Dendritic cell treated with granulocyte-macrophage colony-stimulating factor and Interleukin-4, amounts not matched to agents 40 ng/mL and 50 ng/mL, for 4 days (primary cell): ENCODE measurements at regions of chr11 and their contacts with region 1.

Region 1: GRCh38 chr11:78416305-78417178 is 1.1 kb downstream of the GAB2 start:
- H3K4me3 Mint-ChIP-seq: peak overlapping the region; percentile 97
- H3K27ac Mint-ChIP-seq: peak overlapping the region; percentile 97
- H3K4me1 Mint-ChIP-seq: peaks cover 66% of the 10 kb centered on the region
- H3K27me3 Mint-ChIP-seq: no peaks in the 10 kb centered on the region

Region 2: GRCh38 chr11:77981346-77981947 is 435.1 kb before region 1 on chr11:
- intact Hi-C with region 1: no loop called
- H3K4me3 Mint-ChIP-seq: no peak overlapping the region
- H3K27ac Mint-ChIP-seq: no peak overlapping the region
- H3K4me1 Mint-ChIP-seq: no peaks in the 10 kb centered on the region
- H3K27me3 Mint-ChIP-seq: no peaks in the 10 kb centered on the region

Region 3: GRCh38 chr11:78228467-78228866 is 188.1 kb before region 1 on chr11:
- intact Hi-C with region 1: loop called (anchors 5 kb)
- H3K4me3 Mint-ChIP-seq: no peak overlapping the region
- H3K27ac Mint-ChIP-seq: no peak overlapping the region
- H3K4me1 Mint-ChIP-seq: peaks cover 27% of the 10 kb centered on the region
- H3K27me3 Mint-ChIP-seq: no peaks in the 10 kb centered on the region

Region 4: GRCh38 chr11:78350646-78351165 is 65.8 kb before region 1 on chr11:
- intact Hi-C with region 1: loop called (anchors 2 kb)
- H3K4me3 Mint-ChIP-seq: peak overlapping the region; percentile 43
- H3K27ac Mint-ChIP-seq: peak overlapping the region; percentile 98
- H3K4me1 Mint-ChIP-seq: peaks cover 91% of the 10 kb centered on the region
- H3K27me3 Mint-ChIP-seq: no peaks in the 10 kb centered on the region

Region 5: DNA sequence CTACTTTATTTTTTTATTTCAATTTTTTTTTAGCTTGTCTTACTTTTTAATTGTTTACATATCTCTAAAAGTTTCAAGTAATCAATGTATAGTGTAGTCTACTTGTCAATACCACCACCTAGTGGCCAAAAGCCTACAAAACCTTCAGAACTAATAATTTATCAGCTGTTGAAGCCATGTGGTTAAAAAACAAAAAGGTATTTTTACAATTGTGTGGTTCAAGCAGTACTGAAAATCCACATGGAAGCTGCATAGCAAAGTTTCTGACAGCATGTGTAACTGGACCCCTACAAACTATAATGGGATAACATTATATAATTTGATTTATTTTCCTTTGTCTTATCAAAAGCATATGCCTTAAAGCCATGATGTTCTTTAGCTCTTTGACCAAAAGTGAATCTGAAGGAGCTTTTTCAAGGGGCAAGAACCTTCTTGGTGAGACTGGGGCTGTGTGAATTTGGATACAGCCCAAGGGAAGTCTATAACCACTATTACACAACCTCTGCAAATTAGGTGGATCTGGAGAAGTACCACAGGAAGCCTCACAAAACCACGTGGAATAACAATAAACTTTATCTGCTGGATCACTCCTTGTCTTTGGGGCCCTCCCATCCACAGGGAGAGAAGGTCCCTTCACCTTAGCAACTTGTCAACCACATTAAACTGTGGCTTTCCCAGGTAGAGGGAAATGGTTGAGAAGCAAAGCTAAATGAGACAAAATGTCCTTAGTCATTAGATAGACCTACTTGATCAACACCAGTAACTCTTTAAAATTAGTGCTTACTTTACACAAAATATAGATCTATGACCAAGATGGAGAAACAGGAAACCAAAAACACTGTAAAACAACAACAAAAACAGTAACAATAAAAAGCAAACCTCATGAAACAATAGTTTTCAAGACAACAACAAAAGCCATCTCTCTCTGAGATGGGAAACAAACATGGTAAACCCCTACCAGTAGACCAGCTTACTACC is 148.2 kb after region 1 on chr11:
- intact Hi-C with region 1: loop called (anchors 5 kb)
- H3K4me3 Mint-ChIP-seq: no peak overlapping the region
- H3K27ac Mint-ChIP-seq: no peak overlapping the region
- H3K4me1 Mint-ChIP-seq: peaks cover 32% of the 10 kb centered on the region
- H3K27me3 Mint-ChIP-seq: no peaks in the 10 kb centered on the region

Region 6: GRCh38 chr11:79925570-79925969 is 1509.0 kb after region 1 on chr11:
- intact Hi-C with region 1: no loop called
- H3K4me3 Mint-ChIP-seq: no peak overlapping the region
- H3K27ac Mint-ChIP-seq: no peak overlapping the region
- H3K4me1 Mint-ChIP-seq: no peaks in the 10 kb centered on the region
- H3K27me3 Mint-ChIP-seq: no peaks in the 10 kb centered on the region